ENCODE measurements at regions of chr17 and their contacts with region 1.

Region 1: GRCh38 chr17:35214631-35215273 is 20.6 kb upstream of the SLC35G3 start:
- DNase-seq: peak in 6 of 9 donors; percentile 44 to 64 (median 54)
- ATAC-seq: peak; percentile 36
- H3K4me3 ChIP-seq: peak overlapping the region; percentile 47
- H3K4me3 Mint-ChIP-seq: peak overlapping the region; percentile 69 to 91 (median 84)
- H3K27ac ChIP-seq: peak overlapping the region; percentile 76
- H3K27ac Mint-ChIP-seq: peak overlapping the region; percentile 90 to 99 (median 98)
- H3K4me1 ChIP-seq: peaks cover 75 to 85% of the 10 kb centered on the region in 2 donors
- H3K4me1 Mint-ChIP-seq: peaks cover 69 to 92% (median 87%) of the 10 kb centered on the region in 7 donors
- H3K27me3 ChIP-seq: no peaks in the 10 kb centered on the region
- H3K27me3 Mint-ChIP-seq: no peaks in the 10 kb centered on the region

Region 2: DNA sequence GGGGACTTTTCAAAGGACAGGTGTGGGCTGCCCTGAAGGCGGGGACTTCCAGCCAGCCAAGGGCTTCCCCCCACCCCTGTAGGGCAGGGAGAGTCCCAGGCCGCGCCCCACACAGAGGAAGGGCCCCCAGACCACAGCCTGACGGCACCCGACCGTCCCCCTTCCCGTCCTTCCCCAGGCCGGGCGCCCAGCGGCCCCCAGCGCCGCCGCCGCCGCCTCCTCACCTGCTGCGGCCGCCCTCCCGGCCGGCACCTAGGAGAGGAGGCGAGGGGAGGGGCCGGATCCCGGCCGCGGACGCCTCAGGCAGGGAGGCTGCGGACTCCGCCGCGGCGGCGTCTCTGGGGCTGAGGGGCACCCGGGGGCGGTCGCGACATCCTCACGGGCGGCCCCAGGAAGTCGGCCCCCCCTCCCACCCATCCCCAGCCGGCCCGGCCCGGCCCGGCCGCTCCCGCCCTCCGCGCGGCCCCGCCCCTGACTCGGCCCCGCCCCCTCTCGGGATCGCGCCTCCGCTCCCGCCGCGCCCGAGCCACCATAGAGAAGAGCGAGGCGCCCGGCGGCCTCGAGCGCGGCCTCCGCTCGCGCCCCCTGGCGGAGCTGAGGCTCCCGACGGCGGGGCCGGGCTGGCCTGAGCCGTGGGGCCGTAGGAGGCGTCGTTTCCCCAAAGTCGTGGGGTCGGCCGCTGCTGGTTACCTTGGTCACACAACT is 125.7 kb before region 1 on chr17:
- CTCF ChIA-PET with region 1: no interaction called
- POLR2A ChIA-PET with region 1: no interaction called
- intact Hi-C with region 1: no loop called
- DNase-seq: peak; percentile 77 to 95 (median 89)
- ATAC-seq: peak; percentile 94
- H3K4me3 ChIP-seq: peak overlapping the region; percentile 93
- H3K4me3 Mint-ChIP-seq: peak overlapping the region; percentile 93 to 98 (median 94)
- H3K27ac ChIP-seq: peak overlapping the region; percentile 89
- H3K27ac Mint-ChIP-seq: peak overlapping the region; percentile 89 to 97 (median 94)
- H3K4me1 ChIP-seq: peaks cover 13 to 27% of the 10 kb centered on the region in 2 donors
- H3K4me1 Mint-ChIP-seq: peaks cover 21 to 52% (median 44%) of the 10 kb centered on the region in 7 donors
- H3K27me3 ChIP-seq: no peaks in the 10 kb centered on the region
- H3K27me3 Mint-ChIP-seq: no peaks in the 10 kb centered on the region

Region 3: GRCh38 chr17:35170968-35171771 is 43.6 kb before region 1 on chr17:
- CTCF ChIA-PET with region 1: interaction called, 3 read pairs
- POLR2A ChIA-PET with region 1: interaction called, 81 read pairs
- intact Hi-C with region 1: loop called (anchors 1 kb)
- DNase-seq: peak in 7 of 9 donors; percentile 35 to 77 (median 70)
- ATAC-seq: peak; percentile 86
- H3K4me3 ChIP-seq: peak overlapping the region; percentile 25
- H3K4me3 Mint-ChIP-seq: peak overlapping the region in 8 of 10 donors; percentile 46 to 79 (median 70)
- H3K27ac ChIP-seq: peak overlapping the region; percentile 47
- H3K27ac Mint-ChIP-seq: peak overlapping the region; percentile 65 to 96 (median 89)
- H3K4me1 ChIP-seq: peaks cover 16 to 20% of the 10 kb centered on the region in 2 donors
- H3K4me1 Mint-ChIP-seq: peaks cover 24 to 59% (median 44%) of the 10 kb centered on the region in 7 donors
- H3K27me3 ChIP-seq: no peaks in the 10 kb centered on the region
- H3K27me3 Mint-ChIP-seq: no peaks in the 10 kb centered on the region

Region 4: GRCh38 chr17:35189291-35189690 is 25.5 kb before region 1 on chr17:
- CTCF ChIA-PET with region 1: interaction called, 8 read pairs
- POLR2A ChIA-PET with region 1: interaction called, 55 read pairs
- intact Hi-C with region 1: loop called in 1 of 2 experiments (anchors 1 kb)
- DNase-seq: no peak
- ATAC-seq: no peak
- H3K4me3 ChIP-seq: no peak overlapping the region
- H3K4me3 Mint-ChIP-seq: peak overlapping the region in 9 of 10 donors; percentile 45 to 84 (median 68)
- H3K27ac ChIP-seq: no peak overlapping the region
- H3K27ac Mint-ChIP-seq: peak overlapping the region in 7 of 9 donors; percentile 6 to 94 (median 89)
- H3K4me1 ChIP-seq: peaks cover 14 to 53% of the 10 kb centered on the region in 2 donors
- H3K4me1 Mint-ChIP-seq: peaks cover 44 to 91% (median 72%) of the 10 kb centered on the region in 7 donors
- H3K27me3 ChIP-seq: no peaks in the 10 kb centered on the region
- H3K27me3 Mint-ChIP-seq: peaks cover 0 to 4% (median 0%) of the 10 kb centered on the region in 5 donors

Region 5: DNA sequence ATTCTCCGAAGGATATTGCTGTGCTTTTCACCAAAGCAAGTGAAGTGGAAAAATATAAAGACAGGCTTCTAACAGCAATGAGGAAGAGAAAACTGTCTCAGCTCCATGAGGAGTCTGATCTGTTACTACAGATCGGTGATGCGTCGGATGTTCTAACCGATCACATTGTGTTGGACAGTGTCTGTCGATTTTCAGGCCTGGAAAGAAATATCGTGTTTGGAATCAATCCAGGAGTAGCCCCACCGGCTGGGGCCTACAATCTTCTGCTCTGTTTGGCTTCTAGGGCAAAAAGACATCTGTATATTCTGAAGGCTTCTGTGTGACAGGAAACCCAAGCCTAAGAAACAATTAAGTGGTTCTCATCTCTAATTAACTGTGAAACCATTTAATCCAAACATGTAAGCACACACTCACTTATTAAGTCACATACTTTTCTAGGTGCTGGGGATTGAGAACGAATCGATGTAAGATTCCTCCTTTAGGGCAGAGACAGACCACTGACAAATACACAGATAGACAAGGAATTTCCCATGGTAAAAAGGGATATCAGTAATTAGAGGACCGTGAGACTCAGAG is 50.9 kb after region 1 on chr17:
- CTCF ChIA-PET with region 1: no interaction called
- POLR2A ChIA-PET with region 1: interaction called, 6 read pairs
- intact Hi-C with region 1: loop called in 1 of 2 experiments (anchors 2 kb)
- DNase-seq: no peak
- ATAC-seq: no peak
- H3K4me3 ChIP-seq: no peak overlapping the region
- H3K4me3 Mint-ChIP-seq: peak overlapping the region; percentile 10 to 76 (median 58)
- H3K27ac ChIP-seq: peak overlapping the region; percentile 52
- H3K27ac Mint-ChIP-seq: peak overlapping the region in 8 of 9 donors; percentile 49 to 91 (median 85)
- H3K4me1 ChIP-seq: peaks cover 14 to 47% of the 10 kb centered on the region in 2 donors
- H3K4me1 Mint-ChIP-seq: peaks cover 32 to 84% (median 75%) of the 10 kb centered on the region in 7 donors
- H3K27me3 ChIP-seq: no peaks in the 10 kb centered on the region
- H3K27me3 Mint-ChIP-seq: no peaks in the 10 kb centered on the region

Region 6: GRCh38 chr17:35578197-35578928 is 363.6 kb after region 1 on chr17 and contains the start of gene PEX12:
- CTCF ChIA-PET with region 1: no interaction called
- POLR2A ChIA-PET with region 1: interaction called, 11 read pairs
- intact Hi-C with region 1: no loop called
- DNase-seq: peak; percentile 62 to 94 (median 89)
- ATAC-seq: peak; percentile 99
- H3K4me3 ChIP-seq: peak within 1 kb of the TSS; percentile 86
- H3K4me3 Mint-ChIP-seq: peak within 1 kb of the TSS; percentile 92 to 100 (median 97)
- H3K27ac ChIP-seq: peak within 1 kb of the TSS; percentile 92
- H3K27ac Mint-ChIP-seq: peak within 1 kb of the TSS; percentile 96 to 100 (median 99)
- H3K4me1 ChIP-seq: peaks cover 5 to 12% of the 10 kb centered on the region in 2 donors
- H3K4me1 Mint-ChIP-seq: peaks cover 6 to 40% (median 32%) of the 10 kb centered on the region in 7 donors
- H3K27me3 ChIP-seq: no peaks in the 10 kb centered on the region
- H3K27me3 Mint-ChIP-seq: peaks cover 0 to 2% (median 0%) of the 10 kb centered on the region in 5 donors
- total RNA-seq, gene PEX12: 2.9 to 8.0 (median 5.3) TPM